Dorsolateral prefrontal cortex (tissue), 120 donors: ENCODE measurements at regions of chr10 and their contacts with region 1.

Region 1: DNA sequence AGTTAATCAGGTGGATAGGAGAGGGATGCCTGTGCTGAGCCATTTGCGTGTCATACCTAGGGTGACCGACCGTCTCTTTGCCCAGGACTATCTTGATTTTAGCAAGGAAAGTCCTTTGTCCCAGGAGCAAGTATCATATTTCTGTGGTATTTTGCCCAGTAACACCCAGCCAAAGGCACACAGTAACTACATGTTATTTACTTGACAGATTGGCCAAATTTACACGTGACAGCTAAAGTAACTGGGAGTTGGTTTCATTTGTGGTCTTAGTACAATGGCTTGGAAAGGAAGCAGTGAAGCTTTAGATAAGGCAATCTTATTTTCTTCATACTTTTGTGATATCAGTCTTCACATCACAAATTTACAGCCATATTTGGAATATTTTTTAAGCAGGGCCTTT is 142.1 kb downstream of the JCAD start:
- DNase-seq: no peak
- H3K4me3 ChIP-seq: no peak overlapping the region
- H3K27ac ChIP-seq: no peak overlapping the region
- H3K27me3 ChIP-seq: peaks cover 0 to 11% (median 0%) of the 10 kb centered on the region in 45 donors
- CTCF ChIP-seq: no peak

Region 2: DNA sequence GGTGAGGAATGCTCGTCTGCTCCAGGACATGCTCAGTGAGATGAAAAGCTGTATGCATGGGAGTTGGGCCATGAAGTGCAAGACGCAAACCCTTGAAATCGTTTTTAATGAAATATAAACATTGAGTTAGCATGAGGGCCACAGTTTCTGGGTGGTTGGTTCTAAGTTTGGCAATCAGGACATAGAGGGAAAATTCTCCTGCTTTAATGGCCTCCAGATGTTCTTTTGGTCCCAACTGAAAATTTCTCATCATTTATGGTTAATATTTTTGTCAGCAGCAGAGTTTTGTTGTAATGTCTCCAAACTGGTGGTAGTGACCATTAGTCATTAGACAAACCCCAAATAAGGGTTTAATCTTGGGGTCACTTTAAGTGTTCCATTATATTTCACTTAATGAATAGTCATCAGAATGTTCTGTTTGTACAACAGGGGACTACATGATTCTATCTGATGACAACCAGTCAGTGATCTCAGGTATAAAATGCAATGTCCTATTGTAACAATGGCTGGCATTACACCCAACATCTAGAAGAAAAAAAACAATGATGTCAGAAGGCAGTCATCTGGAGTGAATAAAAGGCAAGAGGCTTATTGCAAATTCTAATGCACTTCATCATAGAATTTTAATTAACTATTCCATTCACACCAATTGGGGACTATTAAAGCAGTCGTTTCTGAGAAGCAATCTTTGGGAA is 55.4 kb before region 1 on chr10:
- intact Hi-C with region 1: loop called in 1 of 2 experiments (anchors 2 kb)
- DNase-seq: no peak
- H3K4me3 ChIP-seq: no peak overlapping the region
- H3K27ac ChIP-seq: no peak overlapping the region
- H3K27me3 ChIP-seq: peaks cover 0 to 4% (median 0%) of the 10 kb centered on the region in 45 donors
- CTCF ChIP-seq: no peak

Region 3: DNA sequence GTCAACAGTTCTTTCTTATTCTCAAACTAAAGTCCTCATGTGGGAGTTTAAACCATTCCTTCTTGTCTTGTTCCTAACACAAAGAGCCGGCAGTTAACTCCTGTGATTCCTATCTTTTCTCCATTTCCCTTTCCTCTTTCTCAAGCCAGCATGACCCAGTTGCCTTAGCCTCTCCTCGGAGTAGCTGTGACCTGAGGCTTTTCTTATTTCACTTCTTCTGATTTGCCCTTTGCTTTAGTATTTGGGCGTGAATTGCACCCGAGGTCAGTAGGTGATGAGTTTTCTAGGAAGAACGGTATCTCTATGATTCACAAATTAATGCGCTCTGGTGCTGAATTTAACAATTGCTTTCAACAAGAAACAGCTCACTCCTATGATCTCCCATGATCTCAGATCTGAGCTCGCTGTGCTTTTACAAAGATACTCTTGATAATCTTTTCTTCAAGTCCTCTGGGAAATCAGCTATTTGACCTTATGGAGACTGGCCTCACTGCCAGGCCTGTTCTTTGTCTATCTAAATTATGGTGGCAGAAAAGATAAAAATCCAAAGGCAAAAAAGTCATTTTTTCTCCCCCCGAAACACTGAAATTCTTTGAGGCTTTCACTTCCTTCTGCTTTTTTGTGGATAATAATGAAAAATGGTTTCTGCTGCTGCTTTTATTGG is 42.6 kb before region 1 on chr10:
- intact Hi-C with region 1: no loop called
- DNase-seq: no peak
- H3K4me3 ChIP-seq: no peak overlapping the region
- H3K27ac ChIP-seq: no peak overlapping the region
- H3K27me3 ChIP-seq: peaks cover 0 to 6% (median 0%) of the 10 kb centered on the region in 45 donors
- CTCF ChIP-seq: no peak

Region 4: DNA sequence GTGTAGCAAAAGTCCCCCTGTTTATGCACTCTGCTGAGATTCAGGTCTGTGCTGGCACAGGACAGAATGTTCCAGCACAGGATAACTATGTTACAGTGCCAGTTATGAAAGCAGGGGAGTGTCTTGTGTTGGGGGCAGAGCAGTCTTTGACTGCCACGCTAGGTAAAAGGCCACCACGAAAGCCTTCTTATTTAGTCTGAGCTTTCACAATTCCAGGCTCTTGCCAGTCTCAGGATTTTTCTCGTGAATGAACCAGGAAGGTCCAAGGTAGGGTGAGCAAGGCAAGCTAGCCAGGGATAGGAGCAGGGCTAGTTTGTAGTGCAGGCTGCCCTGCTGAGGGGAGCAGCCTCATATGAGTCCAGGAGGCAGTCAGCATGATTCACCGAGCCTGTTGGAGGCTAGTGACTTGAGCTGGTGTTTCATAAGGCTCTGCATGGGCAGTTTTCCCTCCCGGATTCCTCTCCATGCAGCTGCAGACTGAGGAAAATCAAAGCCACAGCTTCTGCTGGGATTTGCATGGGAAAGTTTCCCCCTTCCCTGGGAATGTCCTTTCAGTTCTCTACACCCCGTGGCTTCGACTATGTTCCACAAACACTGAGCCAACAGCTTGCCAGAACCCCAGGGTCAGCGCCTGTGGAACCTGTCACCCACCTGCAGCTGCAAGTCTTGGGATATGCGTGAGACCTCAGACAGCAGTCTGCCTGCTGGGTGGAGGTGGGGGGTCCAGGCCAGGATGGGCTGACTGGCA is 29.8 kb after region 1 on chr10:
- intact Hi-C with region 1: no loop called
- DNase-seq: no peak
- H3K4me3 ChIP-seq: no peak overlapping the region
- H3K27ac ChIP-seq: peak overlapping the region in 46 of 59 donors; percentile 18 to 83 (median 64)
- H3K27me3 ChIP-seq: no peaks in the 10 kb centered on the region
- CTCF ChIP-seq: no peak

Region 5: GRCh38 chr10:29962166-29962775 is 45.0 kb after region 1 on chr10:
- intact Hi-C with region 1: no loop called
- DNase-seq: no peak
- H3K4me3 ChIP-seq: no peak overlapping the region
- H3K27ac ChIP-seq: no peak overlapping the region
- H3K27me3 ChIP-seq: peaks cover 0 to 4% (median 0%) of the 10 kb centered on the region in 45 donors
- CTCF ChIP-seq: no peak